Aorta (tissue), 5 donors: ENCODE measurements at regions of chr2 and their contacts with region 1.

Region 1: DNA sequence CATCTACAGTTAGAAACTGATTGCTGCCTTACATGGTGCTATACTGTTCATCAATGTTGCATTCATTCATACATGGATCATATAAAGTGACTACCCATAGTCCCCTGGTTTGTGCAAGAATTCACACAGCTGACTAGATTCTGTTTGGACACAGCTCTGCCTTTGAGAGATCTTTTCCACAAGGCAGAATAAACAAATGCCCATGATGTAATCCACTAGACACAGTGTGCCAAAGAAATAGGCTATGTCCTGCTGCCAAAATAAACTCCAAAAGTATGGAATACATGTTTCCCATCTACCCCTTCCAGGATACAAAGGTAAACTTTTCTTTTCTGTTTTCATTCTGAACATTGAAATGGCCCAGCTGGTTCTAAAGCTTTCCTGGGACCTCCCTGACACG is 269.4 kb upstream of the CHAC2 start:
- DNase-seq: no peak
- ATAC-seq: peak; percentile 81
- H3K4me3 ChIP-seq: no peak overlapping the region
- H3K27ac ChIP-seq: peak overlapping the region; percentile 54 to 83
- H3K4me1 ChIP-seq: peaks cover 7 to 14% of the 10 kb centered on the region in 2 donors
- H3K27me3 ChIP-seq: no peaks in the 10 kb centered on the region

Region 2: DNA sequence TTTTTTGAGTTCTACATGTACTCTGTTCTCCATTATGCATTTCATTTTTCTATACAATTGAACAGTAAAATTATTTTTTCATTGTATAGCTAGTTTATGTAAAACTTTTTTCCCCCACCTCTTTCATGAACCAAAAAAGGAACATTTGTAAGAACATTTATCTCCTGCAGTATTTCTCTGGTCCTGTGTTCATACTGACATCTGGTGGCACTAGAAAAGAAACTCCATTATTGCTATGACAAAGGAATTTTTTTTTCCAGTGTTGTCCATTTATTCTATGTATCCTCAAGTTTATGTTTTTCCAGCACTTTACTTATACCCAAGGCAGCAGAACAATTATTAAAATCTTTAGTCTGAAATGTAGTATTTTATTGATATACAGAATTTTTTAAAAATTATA is 242.0 kb after region 1 on chr2:
- intact Hi-C with region 1: loop called in 1 of 2 experiments (anchors 5 kb)
- DNase-seq: no peak
- ATAC-seq: no peak
- H3K4me3 ChIP-seq: no peak overlapping the region
- H3K27ac ChIP-seq: no peak overlapping the region
- H3K4me1 ChIP-seq: peaks cover 0 to 3% of the 10 kb centered on the region in 2 donors
- H3K27me3 ChIP-seq: no peaks in the 10 kb centered on the region

Region 3: DNA sequence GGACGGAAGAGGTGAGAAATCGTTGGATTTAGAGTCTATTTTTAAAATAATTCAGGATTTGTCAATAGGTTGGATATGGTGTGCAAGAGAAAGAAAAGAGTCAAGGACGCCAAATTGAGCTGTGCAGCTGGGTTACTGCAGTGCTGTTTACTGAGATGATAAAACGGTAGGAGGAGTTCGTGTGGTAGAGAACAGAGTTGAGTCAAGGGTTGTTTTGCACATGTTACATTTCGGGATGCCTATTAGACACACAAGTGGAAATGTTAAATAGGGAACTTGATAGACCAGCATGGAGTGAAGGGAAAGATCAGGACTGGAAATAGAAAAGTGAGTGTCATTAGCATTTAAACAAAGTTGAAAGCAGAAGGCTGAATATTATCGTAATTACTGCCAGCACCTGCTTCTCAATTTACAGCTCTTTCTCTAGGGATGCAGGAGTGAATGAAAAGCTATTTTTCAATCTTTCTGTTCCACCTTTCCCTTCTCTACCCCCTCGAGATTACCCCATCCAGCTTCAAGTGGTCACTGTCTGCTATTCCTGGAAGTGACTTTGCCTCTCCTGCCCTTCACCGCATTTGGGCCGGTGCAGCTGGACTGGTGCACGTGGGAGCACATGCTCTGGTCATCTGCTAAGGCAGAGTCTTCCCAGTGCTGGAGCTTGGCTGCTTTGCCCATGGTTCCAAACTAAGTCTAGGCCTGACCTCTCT is 331.2 kb after region 1 on chr2:
- intact Hi-C with region 1: no loop called
- DNase-seq: no peak
- ATAC-seq: no peak
- H3K4me3 ChIP-seq: no peak overlapping the region
- H3K27ac ChIP-seq: no peak overlapping the region
- H3K4me1 ChIP-seq: no peaks in the 10 kb centered on the region
- H3K27me3 ChIP-seq: no peaks in the 10 kb centered on the region